ENCODE measurements at regions of chr11 and their contacts with region 1.

Region 1: DNA sequence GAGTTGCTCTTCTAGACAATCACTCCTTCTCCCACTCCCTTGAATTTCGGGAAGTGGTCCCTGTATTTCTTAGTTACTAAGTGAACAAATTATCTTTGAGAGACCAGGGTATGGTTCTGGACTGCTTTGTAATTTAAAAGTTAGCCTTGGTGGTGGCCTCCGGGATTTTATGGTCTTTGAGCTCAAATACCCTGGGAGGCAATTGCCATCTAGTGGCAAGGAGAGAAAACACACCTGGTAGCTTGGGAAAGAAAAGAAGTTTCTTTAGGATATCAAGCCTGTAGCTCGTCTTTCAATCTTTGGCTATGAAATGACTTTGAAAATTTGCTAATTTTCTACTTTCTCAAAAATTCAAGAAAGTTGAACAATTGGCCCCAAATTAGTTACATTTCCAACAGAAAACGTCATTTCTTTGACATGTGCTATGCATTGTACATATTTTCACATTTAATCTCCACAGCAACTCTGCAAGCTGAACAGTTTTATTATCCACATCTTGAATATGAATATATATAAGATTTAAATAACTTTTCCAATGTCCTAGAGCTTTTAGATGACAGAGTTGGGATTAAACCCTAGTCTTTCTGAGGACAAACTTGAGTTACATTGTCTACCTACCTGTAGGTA is 39.1 kb downstream of the MMP27 start:
- DNase-seq: peak; percentile 33
- H3K4me3 Mint-ChIP-seq: no peak overlapping the region
- H3K27ac Mint-ChIP-seq: no peak overlapping the region
- H3K4me1 Mint-ChIP-seq: no peaks in the 10 kb centered on the region
- H3K27me3 Mint-ChIP-seq: peaks cover 4% of the 10 kb centered on the region

Region 2: DNA sequence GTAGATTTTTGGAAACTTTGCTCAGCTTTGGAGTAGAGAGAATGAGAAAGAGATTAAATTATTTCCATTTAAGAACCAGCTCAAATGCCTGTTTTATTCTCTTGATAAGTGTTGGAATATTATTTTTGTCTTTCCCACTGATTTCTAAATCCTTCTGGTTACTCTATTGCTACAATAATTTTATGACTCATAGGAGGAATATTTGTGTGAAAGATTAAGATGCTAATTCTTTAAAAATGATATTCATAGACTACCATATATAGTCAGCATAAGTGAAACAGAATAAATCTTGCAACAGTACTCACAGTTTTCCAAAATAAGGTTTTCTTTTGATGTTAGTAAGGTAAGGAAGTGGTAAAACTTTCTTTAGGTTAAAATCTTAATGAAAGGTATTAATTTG is 495.3 kb before region 1 on chr11:
- CTCF ChIA-PET with region 1: no interaction called
- DNase-seq: no peak
- H3K4me3 Mint-ChIP-seq: no peak overlapping the region
- H3K27ac Mint-ChIP-seq: no peak overlapping the region
- H3K4me1 Mint-ChIP-seq: no peaks in the 10 kb centered on the region
- H3K27me3 Mint-ChIP-seq: peaks cover 4% of the 10 kb centered on the region

Region 3: DNA sequence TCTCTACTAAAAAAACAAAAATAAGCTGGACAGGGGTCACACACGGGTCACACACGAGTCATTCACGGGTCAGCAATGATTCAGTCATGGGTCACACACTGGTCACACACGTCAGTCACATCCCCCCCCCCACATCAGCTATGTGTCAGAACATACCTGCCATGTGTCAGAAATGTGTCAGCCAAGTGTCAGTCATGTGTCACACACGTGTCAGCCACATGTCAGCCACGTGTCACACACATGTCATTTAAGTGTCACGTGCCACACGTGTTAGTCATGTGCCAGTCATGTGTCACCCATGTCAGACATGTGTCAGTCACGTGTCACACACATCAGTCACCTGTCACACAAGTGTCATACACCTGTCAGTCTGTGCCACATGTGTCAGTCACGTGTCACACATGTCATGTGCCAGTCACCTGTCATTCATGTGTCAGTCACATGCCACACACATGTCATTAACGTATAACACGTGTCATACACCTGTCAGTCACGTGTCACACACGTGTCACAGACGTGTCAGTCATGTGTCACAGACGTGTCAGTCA is 12.6 kb before region 1 on chr11:
- CTCF ChIA-PET with region 1: interaction called, 16 read pairs
- DNase-seq: no peak
- H3K4me3 Mint-ChIP-seq: no peak overlapping the region
- H3K27ac Mint-ChIP-seq: no peak overlapping the region
- H3K4me1 Mint-ChIP-seq: no peaks in the 10 kb centered on the region
- H3K27me3 Mint-ChIP-seq: peaks cover 13% of the 10 kb centered on the region